Calu3 (cell line): ENCODE measurements at regions of chr17 and their contacts with region 1.

Region 1: DNA sequence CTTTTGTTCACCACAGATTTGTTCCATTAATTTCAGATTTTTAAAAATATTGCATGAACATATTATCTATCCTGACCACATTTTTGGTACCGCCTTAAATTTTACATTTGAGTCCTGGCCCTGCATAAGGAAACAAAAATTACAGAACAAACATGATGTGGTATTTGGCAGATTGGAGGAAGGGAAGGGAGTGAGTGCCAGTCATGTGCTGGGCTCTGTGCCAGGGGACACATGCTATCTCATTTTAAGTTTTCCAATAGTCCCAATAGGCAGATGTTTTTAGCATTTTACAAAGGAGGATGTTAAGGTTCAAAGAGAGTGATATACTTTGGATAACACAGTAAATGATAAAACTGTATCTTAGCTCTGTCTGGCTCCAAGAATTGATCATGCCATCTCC is 185.1 kb downstream of the CDK5R1 start:
- DNase-seq: peak; percentile 19
- H3K4me3 Mint-ChIP-seq: no peak overlapping the region
- H3K27ac Mint-ChIP-seq: no peak overlapping the region
- H3K4me1 Mint-ChIP-seq: peaks cover 7% of the 10 kb centered on the region
- H3K27me3 Mint-ChIP-seq: no peaks in the 10 kb centered on the region
- CTCF ChIP-seq: no peak

Region 2: DNA sequence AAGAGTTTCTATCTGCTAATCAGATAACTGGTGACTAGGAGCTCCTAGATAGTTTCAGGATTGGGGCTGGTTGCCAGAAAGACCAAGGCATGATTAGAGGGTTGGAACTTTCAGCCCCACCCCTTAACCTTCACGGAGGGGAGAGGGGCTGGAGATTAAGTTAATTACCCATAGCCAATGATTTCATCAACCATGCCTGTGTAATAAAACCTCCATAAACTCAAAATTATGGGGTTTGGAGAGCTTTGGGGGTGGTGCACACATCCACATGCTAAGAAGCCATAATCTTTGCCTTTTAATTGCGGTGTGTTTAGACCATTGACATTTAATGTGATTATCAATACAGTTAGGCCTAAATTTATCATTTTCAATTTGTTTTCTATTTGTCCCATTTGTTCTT is 23.4 kb before region 1 on chr17:
- CTCF ChIA-PET with region 1: interaction called, 3 read pairs
- intact Hi-C with region 1: loop called (anchors 1 kb)
- DNase-seq: no peak
- H3K4me3 Mint-ChIP-seq: no peak overlapping the region
- H3K27ac Mint-ChIP-seq: no peak overlapping the region
- H3K4me1 Mint-ChIP-seq: no peaks in the 10 kb centered on the region
- H3K27me3 Mint-ChIP-seq: no peaks in the 10 kb centered on the region
- CTCF ChIP-seq: no peak